Uterus (tissue), 4 donors: ENCODE measurements at regions of chr7 and their contacts with region 1.

Region 1: GRCh38 chr7:154255324-154255723 is 203.1 kb downstream of the DPP6 start:
- DNase-seq: no peak
- H3K4me3 ChIP-seq: no peak overlapping the region
- H3K27ac ChIP-seq: no peak overlapping the region
- H3K4me1 ChIP-seq: no peaks in the 10 kb centered on the region
- H3K27me3 ChIP-seq: no peaks in the 10 kb centered on the region
- CTCF ChIP-seq: no peak
- POLR2A ChIP-seq: no peak

Region 2: DNA sequence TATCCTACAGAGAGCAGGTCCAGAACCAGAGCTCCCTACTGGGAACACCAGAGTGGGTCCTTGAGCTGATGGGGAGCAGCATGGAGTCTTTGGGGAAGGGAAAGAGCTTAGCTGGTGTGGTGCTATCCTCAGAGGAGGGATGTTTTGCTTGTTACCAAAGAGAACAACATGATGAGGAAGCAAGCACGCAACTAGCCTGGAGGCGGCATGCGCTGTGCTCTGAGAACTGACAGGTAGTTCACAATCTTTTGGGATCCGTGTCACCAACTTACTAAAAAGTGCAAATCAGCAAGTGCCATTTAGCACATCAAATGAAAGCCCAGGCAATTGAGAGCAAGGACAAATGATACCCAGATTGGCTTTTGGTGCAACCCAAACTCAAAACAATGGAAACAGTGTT is 54.8 kb after region 1 on chr7:
- intact Hi-C with region 1: loop called (anchors 10 kb)
- DNase-seq: no peak
- H3K4me3 ChIP-seq: no peak overlapping the region
- H3K27ac ChIP-seq: no peak overlapping the region
- H3K4me1 ChIP-seq: no peaks in the 10 kb centered on the region
- H3K27me3 ChIP-seq: no peaks in the 10 kb centered on the region
- CTCF ChIP-seq: no peak
- POLR2A ChIP-seq: no peak

Region 3: DNA sequence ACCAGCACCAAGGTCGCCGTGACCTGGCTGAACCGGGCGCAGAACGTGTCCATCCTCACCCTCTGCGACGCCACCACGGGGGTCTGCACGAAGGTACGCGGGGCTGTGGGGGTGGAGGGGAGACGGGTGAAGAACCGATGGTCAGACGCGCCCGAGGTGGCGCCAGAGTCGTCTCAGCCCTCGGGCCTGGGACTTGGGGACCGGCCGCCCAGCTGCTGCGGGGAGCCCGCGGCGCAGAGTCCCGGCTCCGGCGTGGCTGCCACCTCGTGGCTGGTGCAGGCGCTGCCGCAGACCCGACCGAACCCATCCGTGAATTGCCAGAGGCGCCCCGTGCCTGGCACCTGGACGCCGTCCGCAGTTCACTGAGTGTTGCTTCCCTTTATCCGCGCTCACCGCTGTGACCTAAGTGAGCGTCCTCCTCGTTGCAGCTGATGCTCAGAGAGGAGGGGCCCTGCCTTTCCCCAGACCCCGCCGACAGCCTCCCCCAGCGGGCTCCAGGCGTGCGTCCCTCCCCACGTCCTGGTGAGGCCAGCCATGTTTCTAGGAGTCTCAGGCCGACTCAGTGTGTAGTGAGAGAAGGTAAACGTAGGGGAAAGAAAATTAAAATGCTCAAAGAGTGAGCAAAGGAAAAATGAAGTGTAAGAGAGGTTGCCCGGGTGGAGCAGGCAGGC is 538.9 kb after region 1 on chr7:
- intact Hi-C with region 1: no loop called
- DNase-seq: no peak
- H3K4me3 ChIP-seq: no peak overlapping the region
- H3K27ac ChIP-seq: no peak overlapping the region
- H3K4me1 ChIP-seq: no peaks in the 10 kb centered on the region
- H3K27me3 ChIP-seq: no peaks in the 10 kb centered on the region
- CTCF ChIP-seq: peak in 1 of 4 experiments; percentile 4
- POLR2A ChIP-seq: no peak